ENCODE measurements at regions of chr12 and their contacts with region 1.

Region 1: GRCh38 chr12:89542912-89543592 is 17.2 kb upstream of the POC1B start:
- DNase-seq: peak; percentile 60
- ATAC-seq: peak; percentile 79 to 80

Region 2: GRCh38 chr12:89494411-89495231 is 48.4 kb before region 1 on chr12:
- intact Hi-C with region 1: no loop called
- DNase-seq: no peak
- ATAC-seq: no peak

Region 3: GRCh38 chr12:89709995-89710872 is 167.2 kb after region 1 on chr12:
- intact Hi-C with region 1: loop called in 1 of 2 experiments (anchors 10 kb)
- DNase-seq: peak; percentile 73
- ATAC-seq: peak in 1 of 2 donors; percentile 9

Region 4: GRCh38 chr12:90102957-90103652 is 560.1 kb after region 1 on chr12:
- intact Hi-C with region 1: loop called in 1 of 2 experiments (anchors 2 kb)
- DNase-seq: no peak
- ATAC-seq: peak in 1 of 2 donors; percentile 55

Region 5: GRCh38 chr12:90253674-90254181 is 710.7 kb after region 1 on chr12:
- intact Hi-C with region 1: loop called in 1 of 2 experiments (anchors 10 kb)
- DNase-seq: peak; percentile 66
- ATAC-seq: peak; percentile 79 to 92

Region 6: DNA sequence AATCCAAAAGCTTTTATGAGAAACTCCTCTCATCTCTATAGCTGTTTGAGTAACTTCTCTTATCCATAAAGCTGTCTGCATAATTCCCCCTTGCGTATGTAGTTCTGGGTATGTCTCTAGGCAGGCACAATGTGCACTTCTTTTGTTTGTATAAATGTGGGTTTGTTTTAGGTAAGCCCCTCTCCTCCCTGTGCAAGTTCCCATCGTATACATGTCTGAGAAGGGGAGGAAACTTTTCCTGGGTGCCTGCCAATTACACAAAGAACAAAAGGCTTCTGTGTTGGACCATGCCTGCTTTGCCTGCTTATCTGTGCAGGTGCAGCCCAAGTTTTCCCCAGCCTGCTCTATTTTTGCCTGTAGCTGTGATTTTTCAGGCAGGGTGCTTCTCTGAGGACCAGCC is 1315.2 kb after region 1 on chr12:
- intact Hi-C with region 1: loop called in 1 of 2 experiments (anchors 5 kb)
- DNase-seq: no peak
- ATAC-seq: no peak

Region 7: GRCh38 chr12:90940872-90941499 is 1397.9 kb after region 1 on chr12:
- intact Hi-C with region 1: loop called in 1 of 2 experiments (anchors 10 kb)
- DNase-seq: no peak
- ATAC-seq: peak in 1 of 2 donors; percentile 31

Measured in left cardiac atrium (tissue), 4 donors.